Left colon (tissue), 2 donors: ENCODE measurements at regions of chr5 and their contacts with region 1.

Region 1: DNA sequence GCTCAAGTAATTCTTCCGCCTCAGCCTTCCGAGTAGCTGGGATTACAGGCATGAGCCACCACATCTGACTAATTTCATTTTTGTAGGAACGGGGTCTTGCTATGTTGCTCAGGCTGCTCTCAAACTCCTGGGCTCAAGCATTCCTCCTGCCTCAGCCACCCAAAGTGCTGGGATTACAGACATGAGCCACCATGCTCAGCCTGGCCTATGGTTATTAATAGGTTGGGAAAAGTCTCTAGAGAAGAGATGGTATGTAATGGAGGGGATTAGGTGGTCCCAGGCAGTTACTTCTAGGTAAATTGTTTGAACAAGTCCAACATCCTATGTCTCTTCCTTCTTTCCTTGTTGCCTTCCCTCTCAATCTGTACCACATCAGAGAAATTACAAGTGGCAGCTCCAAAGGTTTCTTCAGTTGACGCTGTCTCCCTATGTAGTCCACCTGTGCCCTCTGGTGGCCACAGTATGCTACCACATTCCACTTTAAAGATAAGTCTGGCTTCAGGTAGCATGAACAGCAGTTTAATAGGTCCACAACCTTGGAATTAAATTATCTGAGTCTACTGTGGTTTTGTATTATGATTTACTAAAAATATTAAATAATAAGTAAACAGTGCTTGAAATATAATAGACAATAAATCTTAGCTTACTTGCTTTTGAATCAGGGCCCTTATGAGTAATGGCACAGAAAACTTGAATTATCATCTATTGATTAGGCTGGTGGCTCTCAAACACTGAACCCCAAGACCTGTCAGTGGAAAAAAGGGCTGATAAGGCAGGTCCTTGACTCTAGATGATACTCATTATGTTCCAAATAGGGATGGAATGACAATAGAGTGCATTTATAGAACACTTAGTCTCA is 9.7 kb downstream of the TIGD6 start:
- DNase-seq: peak; percentile 58 to 85
- ATAC-seq: peak; percentile 67

Region 2: DNA sequence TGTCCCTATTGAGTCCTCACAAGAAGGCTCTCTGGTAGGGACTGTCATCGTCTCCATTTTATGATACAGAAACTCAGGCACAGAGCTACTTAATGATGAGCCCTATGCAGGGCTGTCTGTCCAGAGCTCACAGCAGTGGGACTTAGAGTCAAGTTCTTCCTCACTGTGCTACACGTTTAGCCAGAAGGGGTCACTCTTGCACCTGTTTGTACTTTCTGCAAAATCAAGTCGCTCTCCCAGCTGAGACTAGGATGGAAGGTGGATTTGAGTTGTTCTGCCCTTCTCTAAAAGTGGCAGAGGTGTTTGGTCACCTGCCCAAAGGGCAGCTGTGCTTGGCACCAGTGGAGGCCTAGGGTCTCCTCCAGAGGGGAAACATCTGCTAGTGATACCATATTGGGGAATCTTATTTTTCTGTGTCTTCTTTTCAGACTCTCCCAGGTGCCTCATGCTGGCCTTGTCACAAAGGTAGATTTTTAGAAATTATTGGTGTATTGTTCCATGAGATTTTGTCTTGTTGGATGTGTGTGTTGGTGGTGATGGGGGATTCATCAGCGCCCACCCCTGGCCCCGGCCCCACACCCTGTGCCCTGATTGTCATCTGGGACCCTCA is 156.4 kb before region 1 on chr5:
- intact Hi-C with region 1: loop called (anchors 10 kb)
- DNase-seq: peak in 1 of 2 donors; percentile 68
- ATAC-seq: peak; percentile 60